ENCODE measurements at regions of chr12 and their contacts with region 1.

Region 1: GRCh38 chr12:85920324-85920947 is 46.3 kb downstream of the NTS start:
- DNase-seq: no peak
- H3K4me3 ChIP-seq: no peak overlapping the region
- H3K27ac ChIP-seq: no peak overlapping the region
- H3K4me1 ChIP-seq: no peaks in the 10 kb centered on the region
- H3K27me3 ChIP-seq: no peaks in the 10 kb centered on the region
- CTCF ChIP-seq: peak; percentile 77

Region 2: DNA sequence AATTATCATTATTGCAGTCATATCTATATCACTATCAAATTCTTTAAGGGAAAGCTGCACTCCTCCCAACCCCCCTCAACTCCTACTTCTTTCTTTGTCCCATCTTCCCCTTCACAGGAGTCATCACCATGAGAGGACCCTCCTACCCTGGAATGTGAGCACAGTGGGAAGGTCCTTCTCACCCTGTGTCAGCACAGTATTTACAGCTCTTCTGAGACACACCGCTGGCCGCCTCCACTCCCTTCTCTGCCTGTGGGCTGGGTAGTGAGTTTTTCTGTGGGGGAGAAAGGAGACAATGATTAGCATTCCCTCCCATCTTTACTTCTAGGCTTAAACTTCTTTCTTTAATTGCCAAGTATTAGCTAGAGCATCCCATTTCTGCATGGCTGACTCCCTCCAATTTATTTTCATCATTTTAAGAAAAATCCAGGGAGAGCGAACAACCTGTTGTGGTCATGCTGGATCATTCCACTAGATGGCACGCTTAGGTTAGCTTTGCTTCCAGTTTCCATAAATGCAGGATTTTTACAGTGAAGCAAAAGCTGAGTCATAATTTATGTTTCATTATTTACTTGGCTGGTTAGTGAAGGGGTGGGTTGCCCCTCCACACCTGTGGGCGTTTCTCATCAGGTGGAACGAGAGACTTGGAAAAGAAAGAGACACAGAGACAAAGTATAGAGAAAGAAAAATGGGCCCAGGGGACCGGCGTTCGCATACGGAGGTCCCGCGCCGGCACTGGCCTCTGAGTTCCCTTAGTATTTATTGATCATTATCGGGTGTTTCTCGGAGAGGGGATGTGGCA is 451.9 kb before region 1 on chr12:
- intact Hi-C with region 1: loop called (anchors 5 kb)
- DNase-seq: no peak
- H3K4me3 ChIP-seq: peak overlapping the region; percentile 62
- H3K27ac ChIP-seq: no peak overlapping the region
- H3K4me1 ChIP-seq: peaks cover 7% of the 10 kb centered on the region
- H3K27me3 ChIP-seq: peaks cover 39% of the 10 kb centered on the region
- CTCF ChIP-seq: peak; percentile 80

Region 3: GRCh38 chr12:85765443-85765842 is 155.0 kb before region 1 on chr12:
- intact Hi-C with region 1: no loop called
- DNase-seq: no peak
- H3K4me3 ChIP-seq: no peak overlapping the region
- H3K27ac ChIP-seq: no peak overlapping the region
- H3K4me1 ChIP-seq: no peaks in the 10 kb centered on the region
- H3K27me3 ChIP-seq: no peaks in the 10 kb centered on the region
- CTCF ChIP-seq: no peak

Measured in left ventricle myocardium inferior (tissue), 1 donor.